CD8-positive, alpha-beta memory T cell (primary cell): ENCODE measurements at regions of chr21 and their contacts with region 1.

Region 1: DNA sequence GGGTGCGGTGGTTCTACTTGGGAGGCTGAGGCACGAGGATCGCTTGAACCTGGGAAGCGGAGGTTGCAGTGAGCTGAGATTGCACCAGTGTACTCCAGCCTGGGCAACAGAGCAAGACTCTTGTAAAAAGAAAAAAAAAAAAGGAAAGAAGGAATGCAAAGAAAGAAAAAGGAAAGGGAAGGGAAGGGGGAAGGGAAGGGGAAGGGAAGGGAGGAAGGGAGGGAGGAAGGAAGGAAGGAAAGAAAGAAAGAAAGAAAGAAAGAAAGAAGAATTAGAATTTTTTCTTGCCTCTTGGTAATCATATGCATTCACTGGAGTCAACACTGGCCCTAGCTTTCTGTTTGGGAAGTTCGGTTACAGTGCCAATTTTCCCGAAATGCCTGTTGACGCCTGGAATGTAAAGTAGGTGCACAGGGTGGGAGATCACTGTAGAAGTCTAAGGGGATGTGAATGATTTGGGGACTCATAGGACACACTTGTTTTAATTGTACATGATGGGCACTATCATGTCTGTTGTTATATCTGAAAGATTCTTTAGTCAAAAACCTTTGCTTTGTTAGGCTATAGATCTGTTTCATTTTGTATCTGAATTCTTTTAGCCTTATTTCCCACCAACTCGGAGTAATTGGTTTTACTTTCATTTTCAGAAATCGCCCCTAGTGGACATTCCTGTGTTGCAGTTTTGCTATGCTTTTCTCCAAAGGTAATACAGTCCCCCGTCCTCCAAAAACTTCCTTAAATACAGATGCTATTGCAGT is 59.8 kb upstream of the MORC3 start:
- DNase-seq: peak; percentile 7 to 65 (median 51)
- H3K4me3 ChIP-seq: peak overlapping the region; percentile 49
- H3K4me3 Mint-ChIP-seq: peak overlapping the region; percentile 84 to 90 (median 87)
- H3K27ac ChIP-seq: peak overlapping the region; percentile 32
- H3K27ac Mint-ChIP-seq: peak overlapping the region; percentile 82 to 96 (median 93)
- H3K4me1 ChIP-seq: peaks cover 9% of the 10 kb centered on the region
- H3K4me1 Mint-ChIP-seq: peaks cover 14 to 15% (median 14%) of the 10 kb centered on the region in 3 donors
- H3K27me3 ChIP-seq: no peaks in the 10 kb centered on the region
- H3K27me3 Mint-ChIP-seq: no peaks in the 10 kb centered on the region

Region 2: DNA sequence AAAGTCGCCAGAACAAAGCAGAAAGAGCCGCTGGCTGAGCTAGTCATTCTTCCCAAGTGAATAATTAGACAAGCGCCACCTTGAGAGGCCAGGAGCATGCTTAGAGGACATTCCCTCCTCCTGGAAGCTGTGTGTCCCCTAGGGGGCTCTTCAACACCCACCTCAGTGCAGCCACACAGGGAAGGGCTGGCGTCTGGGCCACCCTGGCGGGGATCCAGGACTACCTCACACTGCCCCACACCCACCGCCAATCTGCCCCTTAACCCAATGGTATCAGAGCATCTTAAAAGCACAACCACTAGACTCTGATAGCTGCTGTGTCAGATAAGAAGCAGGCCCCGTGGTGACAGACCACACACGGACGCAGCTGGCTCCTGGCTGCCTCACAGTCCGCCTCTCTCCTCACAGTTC is 224.8 kb before region 1 on chr21:
- CTCF ChIA-PET with region 1: no interaction called
- POLR2A ChIA-PET with region 1: no interaction called
- DNase-seq: no peak
- H3K4me3 ChIP-seq: no peak overlapping the region
- H3K4me3 Mint-ChIP-seq: no peak overlapping the region
- H3K27ac ChIP-seq: no peak overlapping the region
- H3K27ac Mint-ChIP-seq: no peak overlapping the region
- H3K4me1 ChIP-seq: no peaks in the 10 kb centered on the region
- H3K4me1 Mint-ChIP-seq: no peaks in the 10 kb centered on the region
- H3K27me3 ChIP-seq: no peaks in the 10 kb centered on the region
- H3K27me3 Mint-ChIP-seq: no peaks in the 10 kb centered on the region

Region 3: GRCh38 chr21:36274128-36274527 is 13.9 kb after region 1 on chr21:
- CTCF ChIA-PET with region 1: interaction called, 5 read pairs
- POLR2A ChIA-PET with region 1: interaction called, 12 read pairs
- DNase-seq: no peak
- H3K4me3 ChIP-seq: no peak overlapping the region
- H3K4me3 Mint-ChIP-seq: no peak overlapping the region
- H3K27ac ChIP-seq: no peak overlapping the region
- H3K27ac Mint-ChIP-seq: peak overlapping the region in 3 of 8 donors; percentile 71 to 91 (median 72)
- H3K4me1 ChIP-seq: no peaks in the 10 kb centered on the region
- H3K4me1 Mint-ChIP-seq: no peaks in the 10 kb centered on the region
- H3K27me3 ChIP-seq: no peaks in the 10 kb centered on the region
- H3K27me3 Mint-ChIP-seq: peaks cover 0 to 4% of the 10 kb centered on the region in 2 donors

Region 4: GRCh38 chr21:37220981-37221664 is 960.9 kb after region 1 on chr21:
- CTCF ChIA-PET with region 1: no interaction called
- POLR2A ChIA-PET with region 1: interaction called, 11 read pairs
- DNase-seq: peak; percentile 88 to 95 (median 91)
- H3K4me3 ChIP-seq: peak overlapping the region; percentile 71
- H3K4me3 Mint-ChIP-seq: peak overlapping the region; percentile 87 to 98 (median 94)
- H3K27ac ChIP-seq: peak overlapping the region; percentile 78
- H3K27ac Mint-ChIP-seq: peak overlapping the region; percentile 86 to 98 (median 95)
- H3K4me1 ChIP-seq: peaks cover 41% of the 10 kb centered on the region
- H3K4me1 Mint-ChIP-seq: peaks cover 49 to 60% (median 59%) of the 10 kb centered on the region in 3 donors
- H3K27me3 ChIP-seq: no peaks in the 10 kb centered on the region
- H3K27me3 Mint-ChIP-seq: no peaks in the 10 kb centered on the region